Caco-2 (cell line): ENCODE measurements at regions of chr7 and their contacts with region 1.

Region 1: GRCh38 chr7:86149024-86149665 is 494.6 kb upstream of the GRM3 start:
- DNase-seq: peak in 1 of 2 experiments; percentile 5
- H3K4me3 ChIP-seq: no peak overlapping the region
- H3K4me3 Mint-ChIP-seq: no peak overlapping the region
- H3K27ac Mint-ChIP-seq: no peak overlapping the region
- H3K4me1 ChIP-seq: no peaks in the 10 kb centered on the region
- H3K4me1 Mint-ChIP-seq: no peaks in the 10 kb centered on the region
- H3K27me3 ChIP-seq: no peaks in the 10 kb centered on the region
- H3K27me3 Mint-ChIP-seq: peaks cover 2% of the 10 kb centered on the region
- CTCF ChIP-seq: no peak

Region 2: DNA sequence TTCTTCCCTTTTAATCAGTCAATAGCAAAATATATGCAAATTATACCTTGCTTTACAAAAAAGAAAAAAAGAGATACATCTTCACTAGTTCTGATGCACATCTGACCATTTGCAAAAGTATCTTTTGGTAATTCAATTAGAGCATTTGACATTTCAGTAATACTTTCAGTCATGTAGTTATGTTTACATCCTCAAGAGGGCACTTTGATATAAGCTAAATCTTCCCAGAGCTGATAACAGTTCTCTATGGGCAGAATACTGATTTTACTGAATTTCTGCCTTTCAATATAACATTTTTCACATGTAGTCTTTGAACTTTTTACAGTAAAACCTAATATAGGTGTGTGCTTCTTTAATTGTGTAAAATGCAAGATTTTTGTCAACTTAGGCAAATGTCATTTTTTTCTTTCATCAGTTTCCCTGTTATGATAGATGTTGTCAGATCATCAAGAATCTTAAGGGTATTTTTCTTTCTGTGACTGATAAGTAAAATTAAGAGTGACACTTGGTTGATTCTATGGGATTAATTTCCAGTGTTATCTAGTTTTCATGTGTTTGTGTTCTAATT is 258.8 kb before region 1 on chr7:
- CTCF ChIA-PET with region 1: no interaction called
- POLR2A ChIA-PET with region 1: no interaction called
- intact Hi-C with region 1: loop called (anchors 2 kb)
- DNase-seq: no peak
- H3K4me3 ChIP-seq: no peak overlapping the region
- H3K4me3 Mint-ChIP-seq: no peak overlapping the region
- H3K27ac Mint-ChIP-seq: no peak overlapping the region
- H3K4me1 ChIP-seq: no peaks in the 10 kb centered on the region
- H3K4me1 Mint-ChIP-seq: no peaks in the 10 kb centered on the region
- H3K27me3 ChIP-seq: no peaks in the 10 kb centered on the region
- H3K27me3 Mint-ChIP-seq: peaks cover 3% of the 10 kb centered on the region
- CTCF ChIP-seq: peak; percentile 42 to 52

Region 3: GRCh38 chr7:86469680-86470295 is 320.6 kb after region 1 on chr7:
- CTCF ChIA-PET with region 1: no interaction called
- POLR2A ChIA-PET with region 1: no interaction called
- intact Hi-C with region 1: loop called (anchors 1 kb)
- DNase-seq: peak; percentile 66 to 78
- H3K4me3 ChIP-seq: no peak overlapping the region
- H3K4me3 Mint-ChIP-seq: no peak overlapping the region
- H3K27ac Mint-ChIP-seq: no peak overlapping the region
- H3K4me1 ChIP-seq: no peaks in the 10 kb centered on the region
- H3K4me1 Mint-ChIP-seq: no peaks in the 10 kb centered on the region
- H3K27me3 ChIP-seq: no peaks in the 10 kb centered on the region
- H3K27me3 Mint-ChIP-seq: peaks cover 4% of the 10 kb centered on the region
- CTCF ChIP-seq: peak; percentile 76 to 79